BJ (cell line): ENCODE measurements at regions of chr13 and their contacts with region 1.

Region 1: DNA sequence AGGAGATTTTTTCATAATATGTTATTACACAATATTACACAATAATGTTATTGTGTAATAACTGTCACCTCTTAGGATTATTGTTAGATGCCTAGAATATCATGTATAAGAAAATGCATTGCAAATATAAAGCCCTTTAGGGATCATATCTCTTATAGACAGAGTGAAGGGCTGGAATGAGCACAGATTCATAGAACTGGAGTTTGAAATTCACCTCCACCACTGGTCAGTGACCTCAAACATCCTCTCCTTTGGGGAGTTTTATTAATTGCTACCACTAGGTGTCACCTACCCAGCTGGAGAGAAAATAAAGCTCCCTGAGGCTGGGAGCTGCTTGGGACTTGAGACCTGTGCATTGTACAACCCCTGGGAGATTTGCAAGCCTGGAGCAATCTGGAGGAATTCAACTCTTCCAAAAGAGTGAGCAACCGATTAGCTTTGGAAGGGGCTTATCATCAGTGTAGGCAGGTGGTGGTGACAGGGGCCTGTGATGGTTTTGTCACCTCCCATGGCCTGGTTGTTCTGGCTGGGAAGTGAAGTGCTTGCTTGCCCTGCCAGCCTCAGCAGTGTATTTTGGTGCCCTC is 30.3 kb upstream of the FRY start:
- DNase-seq: no peak
- H3K4me3 ChIP-seq: no peak overlapping the region
- H3K27me3 ChIP-seq: no peaks in the 10 kb centered on the region
- CTCF ChIP-seq: peak; percentile 65

Region 2: DNA sequence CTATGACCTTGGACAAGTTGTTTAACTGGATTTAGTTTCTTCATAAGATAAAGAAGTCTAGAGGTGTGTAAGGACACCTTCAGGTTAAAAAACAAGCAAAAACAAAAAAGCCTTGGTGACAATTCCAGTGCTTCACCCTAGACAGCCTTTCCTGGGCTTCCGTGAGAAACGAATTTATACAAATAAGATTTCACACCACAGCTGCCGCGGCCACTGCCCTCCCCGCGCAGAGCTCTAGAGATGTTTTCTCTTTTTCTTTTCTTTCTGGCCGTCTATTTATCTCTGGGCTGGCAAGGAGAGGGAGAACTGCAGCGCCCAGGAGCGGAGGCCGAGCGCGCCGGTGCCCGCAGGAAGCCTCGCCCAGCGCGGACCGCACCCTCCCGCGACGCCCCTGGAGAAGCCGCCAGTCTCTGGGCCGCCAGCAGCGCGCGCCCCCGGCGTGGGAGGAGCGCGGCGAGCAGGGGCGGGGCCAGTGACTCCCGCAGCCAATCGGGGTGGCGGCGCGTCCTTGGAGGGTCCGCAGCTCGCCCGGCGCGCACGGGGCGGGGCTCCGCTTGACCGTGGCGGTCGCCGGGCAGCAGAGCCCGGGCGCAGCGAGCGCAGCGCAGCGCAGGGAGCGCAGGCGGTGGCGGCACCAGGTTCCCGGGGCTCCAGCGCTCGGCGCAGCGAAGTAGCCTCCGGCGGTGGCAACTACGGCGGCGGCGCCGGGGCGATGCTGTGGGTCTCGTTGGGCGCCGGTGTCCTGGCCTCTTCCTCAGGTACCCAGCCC is 154.9 kb before region 1 on chr13:
- CTCF ChIA-PET with region 1: no interaction called
- POLR2A ChIA-PET with region 1: no interaction called
- DNase-seq: peak; percentile 49
- H3K4me3 ChIP-seq: peak overlapping the region; percentile 84
- H3K27me3 ChIP-seq: peaks cover 14% of the 10 kb centered on the region
- CTCF ChIP-seq: no peak

Region 3: GRCh38 chr13:31965361-31966066 is 35.8 kb before region 1 on chr13:
- CTCF ChIA-PET with region 1: no interaction called
- POLR2A ChIA-PET with region 1: no interaction called
- DNase-seq: no peak
- H3K4me3 ChIP-seq: no peak overlapping the region
- H3K27me3 ChIP-seq: no peaks in the 10 kb centered on the region
- CTCF ChIP-seq: no peak

Region 4: GRCh38 chr13:31987535-31988170 is 13.6 kb before region 1 on chr13:
- CTCF ChIA-PET with region 1: interaction called, 11 read pairs
- POLR2A ChIA-PET with region 1: no interaction called
- DNase-seq: no peak
- H3K4me3 ChIP-seq: no peak overlapping the region
- H3K27me3 ChIP-seq: no peaks in the 10 kb centered on the region
- CTCF ChIP-seq: no peak

Region 5: DNA sequence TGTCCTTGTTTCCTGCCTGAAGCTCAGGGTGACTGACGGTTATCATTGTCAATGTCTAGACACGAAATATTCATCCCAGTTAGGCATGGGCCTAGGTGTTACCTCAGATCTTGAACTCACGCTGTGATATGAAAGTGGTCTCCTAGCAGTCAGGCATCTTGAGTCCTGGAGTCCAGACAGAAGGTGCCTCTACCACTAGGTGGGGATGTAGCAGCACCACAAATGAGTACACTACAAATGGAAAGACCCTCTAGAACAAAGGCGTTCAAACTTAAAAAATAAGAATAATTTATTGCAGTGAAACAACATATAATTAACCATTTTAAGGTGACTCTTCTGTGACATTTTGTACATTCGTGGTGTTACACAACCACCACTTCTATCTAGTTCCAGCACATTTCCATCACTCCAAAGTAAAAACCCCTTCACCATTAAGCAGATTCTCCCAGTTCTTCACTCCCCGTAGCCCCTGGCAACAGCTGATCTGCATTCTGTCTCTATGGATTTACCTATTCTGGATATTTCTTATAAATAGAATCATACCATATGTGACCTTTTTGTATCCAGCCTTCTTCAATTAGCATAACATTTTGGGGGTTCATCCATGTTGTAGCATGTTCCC is 18.4 kb after region 1 on chr13:
- CTCF ChIA-PET with region 1: interaction called, 4 read pairs
- POLR2A ChIA-PET with region 1: interaction called, 11 read pairs
- DNase-seq: no peak
- H3K4me3 ChIP-seq: no peak overlapping the region
- H3K27me3 ChIP-seq: no peaks in the 10 kb centered on the region
- CTCF ChIP-seq: peak; percentile 90

Region 6: DNA sequence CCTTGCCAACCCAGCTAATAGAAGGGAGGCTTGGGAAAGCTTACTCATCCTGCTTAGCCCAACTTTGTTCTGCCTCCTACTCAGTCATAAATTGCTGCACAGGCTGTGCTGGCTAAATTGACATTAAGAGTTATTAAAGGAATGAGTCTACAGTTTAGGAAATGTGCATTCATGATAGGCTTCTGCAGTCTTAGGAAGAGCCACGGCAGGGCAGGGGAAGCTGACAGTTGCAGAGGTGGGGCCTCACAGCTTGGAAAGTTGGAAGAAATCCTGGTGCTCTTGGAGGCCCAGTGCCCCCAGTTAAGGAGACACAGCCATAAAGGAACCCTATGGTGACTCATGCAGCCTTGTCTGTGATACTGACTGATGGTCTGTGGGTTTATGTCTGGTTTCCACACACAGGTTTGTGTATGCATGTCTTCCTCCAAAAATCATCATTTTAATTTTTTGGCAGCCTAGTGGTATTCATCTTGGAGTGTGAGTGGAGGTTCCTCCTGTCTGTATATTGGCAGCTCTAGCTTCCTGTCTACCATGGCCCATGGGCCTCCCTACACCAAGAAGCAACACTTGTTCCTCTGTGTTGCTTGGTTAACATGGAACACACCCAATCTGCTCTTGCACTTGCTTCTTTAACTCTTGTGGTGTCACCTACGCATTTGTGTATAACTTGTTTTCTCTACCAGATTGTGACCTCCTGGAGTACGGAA is 880.0 kb after region 1 on chr13:
- CTCF ChIA-PET with region 1: no interaction called
- POLR2A ChIA-PET with region 1: no interaction called
- DNase-seq: peak; percentile 43
- H3K4me3 ChIP-seq: no peak overlapping the region
- H3K27me3 ChIP-seq: no peaks in the 10 kb centered on the region
- CTCF ChIP-seq: no peak